Sigmoid colon (tissue), 7 donors: ENCODE measurements at regions of chr16 and their contacts with region 1.

Region 1: GRCh38 chr16:67667817-67668494 is 1.3 kb downstream of the C16orf86 start:
- DNase-seq: peak; percentile 95
- H3K4me3 ChIP-seq: peak overlapping the region; percentile 76 to 99 (median 84)
- H3K27ac ChIP-seq: peak overlapping the region; percentile 91 to 95 (median 92)
- H3K4me1 ChIP-seq: peaks cover 0 to 33% (median 28%) of the 10 kb centered on the region in 4 donors
- H3K27me3 ChIP-seq: no peaks in the 10 kb centered on the region
- CTCF ChIP-seq: peak; percentile 80 to 90 (median 87)
- EP300 ChIP-seq: no peak
- POLR2A ChIP-seq: no peak

Region 2: GRCh38 chr16:67260426-67261075 is 407.4 kb before region 1 on chr16:
- intact Hi-C with region 1: no loop called
- DNase-seq: peak; percentile 55
- H3K4me3 ChIP-seq: no peak overlapping the region
- H3K27ac ChIP-seq: no peak overlapping the region
- H3K4me1 ChIP-seq: no peaks in the 10 kb centered on the region
- H3K27me3 ChIP-seq: peaks cover 0 to 3% (median 0%) of the 10 kb centered on the region in 3 donors
- CTCF ChIP-seq: no peak
- EP300 ChIP-seq: no peak
- POLR2A ChIP-seq: no peak

Region 3: DNA sequence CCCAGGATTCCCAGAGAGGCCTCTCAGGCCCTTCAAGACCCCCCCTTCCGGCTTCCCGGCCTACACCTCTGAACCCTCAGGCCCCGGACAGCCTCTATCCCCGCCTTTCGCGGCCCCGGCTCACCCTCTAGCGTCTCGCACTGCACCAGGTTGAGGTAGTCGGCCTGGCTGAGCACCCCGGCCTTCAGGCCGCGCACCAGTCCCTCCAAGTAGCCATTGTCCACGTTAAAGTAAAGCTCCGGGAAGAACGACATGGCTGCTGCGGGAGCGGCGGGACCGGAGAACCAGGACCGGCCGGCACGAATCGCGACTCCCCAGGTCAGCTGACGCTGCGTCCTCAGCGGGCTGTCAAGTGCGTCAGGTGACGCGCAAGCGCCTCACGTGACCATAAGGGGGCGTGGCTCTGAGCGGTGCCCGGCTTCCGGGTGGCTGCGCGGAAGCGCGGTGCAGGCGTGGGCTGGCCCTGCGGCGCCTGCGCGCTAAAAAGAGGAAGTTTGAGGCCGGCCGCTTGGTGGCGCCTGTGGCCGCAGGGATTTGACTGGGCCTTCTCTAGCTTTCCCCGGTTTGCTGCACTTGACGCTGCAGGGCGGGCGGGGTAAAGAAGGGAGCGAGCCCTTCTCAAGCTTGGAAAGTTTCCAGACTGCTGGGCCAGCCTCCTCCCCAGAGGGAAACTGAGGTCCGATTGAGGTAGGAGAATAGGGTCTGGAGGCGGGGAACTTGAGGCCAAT is 187.0 kb before region 1 on chr16 and contains the start of gene ATP6V0D1:
- intact Hi-C with region 1: loop called (anchors 5 kb)
- DNase-seq: peak; percentile 99
- H3K4me3 ChIP-seq: peak within 1 kb of the TSS; percentile 82 to 97 (median 94)
- H3K27ac ChIP-seq: peak within 1 kb of the TSS; percentile 87 to 98 (median 94)
- H3K4me1 ChIP-seq: peaks cover 0 to 52% (median 47%) of the 10 kb centered on the region in 4 donors
- H3K27me3 ChIP-seq: no peaks in the 10 kb centered on the region
- CTCF ChIP-seq: peak; percentile 80 to 89 (median 86)
- EP300 ChIP-seq: peak in 1 of 4 donors; percentile 80
- POLR2A ChIP-seq: peak; percentile 57 to 77
- total RNA-seq, gene ATP6V0D1: 70.3 to 112 (median 93.6) TPM

Region 4: GRCh38 chr16:67546761-67547422 is 121.1 kb before region 1 on chr16:
- intact Hi-C with region 1: loop called (anchors 5 kb)
- DNase-seq: peak; percentile 85
- H3K4me3 ChIP-seq: no peak overlapping the region
- H3K27ac ChIP-seq: peak overlapping the region; percentile 24 to 50 (median 32)
- H3K4me1 ChIP-seq: peaks cover 0 to 21% (median 13%) of the 10 kb centered on the region in 4 donors
- H3K27me3 ChIP-seq: no peaks in the 10 kb centered on the region
- CTCF ChIP-seq: peak; percentile 83 to 94 (median 91)
- EP300 ChIP-seq: no peak
- POLR2A ChIP-seq: no peak